ENCODE measurements at regions of chr1 and their contacts with region 1.

Region 1: GRCh38 chr1:202798792-202799331 is 9.4 kb downstream of the KDM5B start:
- DNase-seq: no peak
- H3K4me3 ChIP-seq: no peak overlapping the region
- H3K27ac ChIP-seq: no peak overlapping the region
- H3K4me1 ChIP-seq: peaks cover 7 to 37% (median 19%) of the 10 kb centered on the region in 4 donors
- H3K27me3 ChIP-seq: no peaks in the 10 kb centered on the region
- CTCF ChIP-seq: no peak
- EP300 ChIP-seq: no peak
- POLR2A ChIP-seq: no peak

Region 2: GRCh38 chr1:202825759-202826158 is 26.9 kb after region 1 on chr1:
- in situ Hi-C with region 1: no loop called
- intact Hi-C with region 1: loop called (anchors 1 kb)
- DNase-seq: no peak
- H3K4me3 ChIP-seq: no peak overlapping the region
- H3K27ac ChIP-seq: no peak overlapping the region
- H3K4me1 ChIP-seq: no peaks in the 10 kb centered on the region
- H3K27me3 ChIP-seq: no peaks in the 10 kb centered on the region
- CTCF ChIP-seq: no peak
- EP300 ChIP-seq: no peak
- POLR2A ChIP-seq: no peak

Region 3: DNA sequence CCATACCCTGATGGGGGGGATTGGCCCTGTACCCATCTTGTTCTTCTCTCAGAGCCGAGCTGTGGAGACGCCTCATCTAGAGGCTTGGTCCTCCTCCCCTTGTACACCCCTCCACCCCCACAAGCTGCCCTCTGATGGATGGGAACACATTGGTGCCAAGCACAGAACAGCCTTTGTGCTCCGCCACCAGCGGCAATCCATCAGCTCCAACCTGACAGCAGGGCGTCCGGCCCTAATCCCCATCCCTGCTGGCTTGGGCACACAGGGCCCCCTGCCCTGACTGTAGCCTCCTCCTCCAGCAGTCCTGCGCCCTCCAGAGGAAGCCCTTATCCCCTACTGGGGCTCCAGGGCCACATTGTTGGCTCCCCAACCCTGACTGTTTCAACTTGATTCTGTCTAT is 290.8 kb after region 1 on chr1:
- in situ Hi-C with region 1: no loop called
- intact Hi-C with region 1: no loop called
- DNase-seq: no peak
- H3K4me3 ChIP-seq: no peak overlapping the region
- H3K27ac ChIP-seq: no peak overlapping the region
- H3K4me1 ChIP-seq: no peaks in the 10 kb centered on the region
- H3K27me3 ChIP-seq: peaks cover 6% of the 10 kb centered on the region
- CTCF ChIP-seq: no peak
- EP300 ChIP-seq: no peak
- POLR2A ChIP-seq: no peak

Measured in transverse colon (tissue), 4 donors.